Activated naive CD4-positive, alpha-beta T cell treated with anti-CD3 and anti-CD28 coated beads for 36 hours (primary cell): ENCODE measurements at regions of chr1 and their contacts with region 1.

Region 1: DNA sequence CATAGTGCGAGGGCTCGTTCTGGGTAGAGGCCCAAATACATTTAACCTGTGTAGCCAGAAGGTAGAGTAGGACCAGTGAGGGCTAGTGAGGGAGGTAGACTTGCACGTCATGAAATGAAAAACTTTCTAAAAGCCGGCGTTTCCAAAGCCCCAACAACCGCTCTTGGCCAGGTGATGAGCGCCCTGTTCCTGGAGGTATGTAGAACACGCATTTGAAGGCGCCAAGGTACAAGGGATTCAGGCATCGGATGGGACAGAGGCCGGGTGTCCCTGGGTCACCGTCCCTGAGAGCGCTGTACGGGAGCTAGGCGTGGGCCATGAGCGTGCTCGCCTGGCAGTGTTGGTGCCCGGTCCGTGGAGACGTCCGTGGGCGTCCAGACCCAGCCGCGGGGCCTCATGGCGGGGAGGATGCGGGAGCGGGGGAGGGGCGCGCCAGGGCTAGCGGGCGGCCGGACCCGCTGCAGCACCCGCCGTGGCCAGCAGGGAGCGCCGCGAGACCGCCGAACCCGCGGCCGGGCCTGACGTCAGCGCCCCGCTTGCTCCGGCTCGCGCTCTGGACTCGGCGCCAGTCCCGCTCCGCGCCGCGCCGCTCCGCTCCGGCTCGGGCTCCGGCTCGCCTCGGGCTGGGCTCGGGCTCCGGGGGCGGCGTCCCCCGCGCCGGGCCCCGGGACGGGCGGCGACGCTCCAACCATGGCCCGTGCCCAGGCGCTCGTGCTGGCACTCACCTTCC is at the start of gene PTPRU:
- DNase-seq: peak; percentile 77
- H3K4me3 Mint-ChIP-seq: peak within 1 kb of the TSS; percentile 65
- H3K27ac Mint-ChIP-seq: no peak within 1 kb of the TSS
- H3K4me1 Mint-ChIP-seq: peaks cover 17% of the 10 kb centered on the region
- H3K27me3 Mint-ChIP-seq: peaks cover 42% of the 10 kb centered on the region
- total RNA-seq, gene PTPRU: 0.15 to 0.38 TPM

Region 2: GRCh38 chr1:29305943-29306342 is 69.8 kb after region 1 on chr1:
- CTCF ChIA-PET with region 1: no interaction called
- intact Hi-C with region 1: no loop called
- DNase-seq: no peak
- H3K4me3 Mint-ChIP-seq: no peak overlapping the region
- H3K27ac Mint-ChIP-seq: no peak overlapping the region
- H3K4me1 Mint-ChIP-seq: no peaks in the 10 kb centered on the region
- H3K27me3 Mint-ChIP-seq: no peaks in the 10 kb centered on the region

Region 3: GRCh38 chr1:29453502-29454240 is 217.6 kb after region 1 on chr1:
- CTCF ChIA-PET with region 1: no interaction called
- intact Hi-C with region 1: loop called (anchors 2 kb)
- DNase-seq: no peak
- H3K4me3 Mint-ChIP-seq: no peak overlapping the region
- H3K27ac Mint-ChIP-seq: no peak overlapping the region
- H3K4me1 Mint-ChIP-seq: no peaks in the 10 kb centered on the region
- H3K27me3 Mint-ChIP-seq: peaks cover 2% of the 10 kb centered on the region

Region 4: GRCh38 chr1:30379684-30380624 is 1143.8 kb after region 1 on chr1:
- CTCF ChIA-PET with region 1: interaction called, 3 read pairs
- intact Hi-C with region 1: loop called (anchors 2 kb)
- DNase-seq: peak; percentile 69
- H3K4me3 Mint-ChIP-seq: no peak overlapping the region
- H3K27ac Mint-ChIP-seq: no peak overlapping the region
- H3K4me1 Mint-ChIP-seq: no peaks in the 10 kb centered on the region
- H3K27me3 Mint-ChIP-seq: peaks cover 5% of the 10 kb centered on the region

Region 5: DNA sequence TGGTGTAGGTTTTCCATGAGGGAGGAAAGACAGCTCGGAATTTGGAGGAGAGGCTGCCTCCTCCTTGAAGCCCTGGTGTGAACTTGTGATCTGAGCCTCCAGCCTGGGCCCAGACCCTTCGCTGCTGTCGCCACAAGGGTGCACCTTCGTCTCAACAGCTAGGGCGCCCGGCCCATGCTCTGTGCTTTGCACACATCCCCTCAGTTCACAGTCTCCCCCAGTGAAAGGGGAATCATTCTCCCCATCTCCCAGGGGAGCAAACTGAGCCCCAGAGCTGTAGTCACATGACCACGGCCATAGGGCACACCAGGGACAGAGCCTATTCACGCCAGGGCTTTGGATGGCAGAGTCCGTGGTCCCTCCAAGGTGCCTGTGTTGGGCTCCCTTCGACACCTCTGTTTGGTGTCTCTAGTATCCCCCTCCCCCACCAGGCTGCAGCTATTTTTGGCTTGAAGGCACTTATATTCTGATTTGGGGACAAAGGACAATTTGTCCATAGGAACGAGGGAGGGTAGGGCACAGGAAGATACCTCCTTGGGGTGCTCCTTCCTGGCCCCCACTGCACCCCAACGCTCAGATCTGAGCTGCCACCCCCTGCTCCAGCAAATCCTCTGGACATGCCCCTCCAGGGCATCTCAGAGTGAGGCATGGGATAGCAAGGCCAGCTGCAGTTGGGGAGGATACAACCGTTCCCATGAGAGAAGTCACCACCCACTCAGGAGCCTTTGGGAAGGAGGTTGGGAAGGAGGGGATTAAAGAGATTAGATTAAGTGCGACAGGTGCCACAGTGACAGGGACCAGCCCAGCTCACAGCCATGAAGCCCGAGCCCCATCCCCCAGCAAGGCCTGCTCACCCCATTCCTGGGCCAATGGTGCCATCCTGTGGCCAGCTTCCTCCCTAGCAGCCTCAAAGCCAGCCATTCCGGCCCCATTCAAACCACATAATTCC is 1471.6 kb after region 1 on chr1:
- CTCF ChIA-PET with region 1: no interaction called
- intact Hi-C with region 1: loop called (anchors 1 kb)
- DNase-seq: peak; percentile 82
- H3K4me3 Mint-ChIP-seq: no peak overlapping the region
- H3K27ac Mint-ChIP-seq: no peak overlapping the region
- H3K4me1 Mint-ChIP-seq: no peaks in the 10 kb centered on the region
- H3K27me3 Mint-ChIP-seq: no peaks in the 10 kb centered on the region